ENCODE measurements at regions of chr4 and their contacts with region 1.

Region 1: DNA sequence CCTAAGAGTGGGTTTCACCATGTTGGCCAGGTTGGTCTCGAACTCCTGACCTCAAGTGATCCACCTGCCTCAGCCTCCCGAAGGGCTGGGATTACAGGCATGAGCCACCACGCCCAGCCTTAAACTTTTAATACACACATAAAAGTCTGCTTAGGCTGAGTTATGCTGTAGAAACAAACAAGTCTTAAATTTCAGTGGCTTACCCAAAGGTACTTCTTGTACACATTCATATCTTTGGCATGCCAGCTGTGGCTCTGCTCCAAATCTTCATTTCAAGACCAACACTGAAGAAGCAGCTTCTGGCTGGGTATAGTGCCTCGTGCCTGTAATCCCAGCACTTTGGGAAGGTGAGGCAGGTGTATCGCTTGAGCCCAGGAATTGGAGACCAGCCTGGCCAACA is 80.3 kb downstream of the PPEF2 start:
- DNase-seq: peak; percentile 38 to 59
- ATAC-seq: peak; percentile 76 to 77
- H3K4me3 ChIP-seq: no peak overlapping the region
- H3K27ac ChIP-seq: peak overlapping the region in 3 of 4 donors; percentile 28 to 74 (median 65)
- H3K4me1 ChIP-seq: peaks cover 0 to 10% of the 10 kb centered on the region in 2 donors
- H3K27me3 ChIP-seq: no peaks in the 10 kb centered on the region
- CTCF ChIP-seq: no peak
- POLR2A ChIP-seq: no peak

Region 2: GRCh38 chr4:75769036-75769435 is 52.9 kb before region 1 on chr4:
- in situ Hi-C with region 1: no loop called
- intact Hi-C with region 1: loop called (anchors 10 kb)
- DNase-seq: no peak
- ATAC-seq: peak in 1 of 2 donors; percentile 36
- H3K4me3 ChIP-seq: no peak overlapping the region
- H3K27ac ChIP-seq: peak overlapping the region in 2 of 4 donors; percentile 2 to 40
- H3K4me1 ChIP-seq: peaks cover 4 to 10% of the 10 kb centered on the region in 2 donors
- H3K27me3 ChIP-seq: no peaks in the 10 kb centered on the region
- CTCF ChIP-seq: no peak
- POLR2A ChIP-seq: no peak

Region 3: GRCh38 chr4:75940692-75941253 is 118.8 kb after region 1 on chr4 and contains the start of gene NAAA:
- in situ Hi-C with region 1: no loop called
- intact Hi-C with region 1: loop called (anchors 10 kb)
- DNase-seq: peak; percentile 27 to 81
- ATAC-seq: peak; percentile 65 to 90
- H3K4me3 ChIP-seq: peak within 1 kb of the TSS; percentile 77 to 92 (median 82)
- H3K27ac ChIP-seq: peak within 1 kb of the TSS; percentile 72 to 88 (median 80)
- H3K4me1 ChIP-seq: no peaks in the 10 kb centered on the region
- H3K27me3 ChIP-seq: no peaks in the 10 kb centered on the region
- CTCF ChIP-seq: peak in 3 of 5 experiments; percentile 27 to 51 (median 44)
- POLR2A ChIP-seq: peak; percentile 20 to 30
- total RNA-seq, gene NAAA: 18.5 to 69.8 (median 42.3) TPM

Region 4: GRCh38 chr4:75950213-75950815 is 128.3 kb after region 1 on chr4:
- in situ Hi-C with region 1: loop called in 1 of 4 experiments (anchors 25 kb)
- intact Hi-C with region 1: loop called (anchors 10 kb)
- DNase-seq: no peak
- ATAC-seq: no peak
- H3K4me3 ChIP-seq: no peak overlapping the region
- H3K27ac ChIP-seq: no peak overlapping the region
- H3K4me1 ChIP-seq: no peaks in the 10 kb centered on the region
- H3K27me3 ChIP-seq: no peaks in the 10 kb centered on the region
- CTCF ChIP-seq: no peak
- POLR2A ChIP-seq: no peak

Region 5: GRCh38 chr4:76293772-76294171 is 471.8 kb after region 1 on chr4:
- in situ Hi-C with region 1: no loop called
- intact Hi-C with region 1: no loop called
- DNase-seq: no peak
- ATAC-seq: no peak
- H3K4me3 ChIP-seq: no peak overlapping the region
- H3K27ac ChIP-seq: no peak overlapping the region
- H3K4me1 ChIP-seq: peaks cover 0 to 12% of the 10 kb centered on the region in 2 donors
- H3K27me3 ChIP-seq: no peaks in the 10 kb centered on the region
- CTCF ChIP-seq: no peak
- POLR2A ChIP-seq: no peak

Measured in gastrocnemius medialis (tissue), 4 donors.